Mammary epithelial cell (primary cell): ENCODE measurements at regions of chr9 and their contacts with region 1.

Region 1: DNA sequence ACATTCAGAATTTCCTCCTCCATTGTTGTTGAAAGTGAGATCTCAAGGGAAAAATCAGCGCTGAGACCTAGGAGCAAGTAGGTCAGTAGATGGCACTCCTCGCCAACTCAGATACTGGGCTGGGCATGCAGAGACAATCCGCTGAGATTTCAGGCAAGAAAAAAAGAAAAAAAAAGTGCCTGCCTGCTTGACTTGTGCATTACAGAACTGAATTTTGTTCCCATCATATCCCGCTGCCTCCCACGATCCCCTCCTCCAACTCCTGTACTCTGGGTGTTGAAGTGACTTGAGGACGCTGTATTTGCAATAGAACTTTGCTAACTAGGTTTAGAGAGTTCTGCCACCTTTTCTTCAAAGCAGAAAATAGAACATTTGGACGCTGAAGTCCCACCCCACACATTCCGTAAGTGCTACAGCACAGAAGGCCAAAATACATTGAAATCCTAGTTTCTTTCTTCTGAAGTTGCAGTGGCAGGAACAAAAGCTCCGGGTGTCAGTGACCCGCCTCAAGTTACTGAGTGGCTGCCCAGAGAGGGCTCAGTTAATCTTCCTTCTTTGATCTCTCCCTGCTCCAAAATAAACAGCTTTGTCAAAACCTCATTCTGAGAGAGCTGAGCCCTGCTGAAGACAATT is 265.8 kb downstream of the MLLT3 start:
- DNase-seq: peak; percentile 70
- H3K4me3 ChIP-seq: no peak overlapping the region
- H3K27ac ChIP-seq: no peak overlapping the region
- H3K4me1 ChIP-seq: peaks cover 9% of the 10 kb centered on the region
- H3K27me3 ChIP-seq: no peaks in the 10 kb centered on the region
- CTCF ChIP-seq: peak; percentile 85 to 89

Region 2: GRCh38 chr9:20197976-20198685 is 158.4 kb before region 1 on chr9:
- CTCF ChIA-PET with region 1: no interaction called
- dilution Hi-C with region 1: no loop called
- in situ Hi-C with region 1: no loop called
- intact Hi-C with region 1: loop called (anchors 2 kb)
- DNase-seq: peak; percentile 43
- H3K4me3 ChIP-seq: no peak overlapping the region
- H3K27ac ChIP-seq: no peak overlapping the region
- H3K4me1 ChIP-seq: no peaks in the 10 kb centered on the region
- H3K27me3 ChIP-seq: no peaks in the 10 kb centered on the region
- CTCF ChIP-seq: peak in 1 of 2 donors; percentile 13

Region 3: DNA sequence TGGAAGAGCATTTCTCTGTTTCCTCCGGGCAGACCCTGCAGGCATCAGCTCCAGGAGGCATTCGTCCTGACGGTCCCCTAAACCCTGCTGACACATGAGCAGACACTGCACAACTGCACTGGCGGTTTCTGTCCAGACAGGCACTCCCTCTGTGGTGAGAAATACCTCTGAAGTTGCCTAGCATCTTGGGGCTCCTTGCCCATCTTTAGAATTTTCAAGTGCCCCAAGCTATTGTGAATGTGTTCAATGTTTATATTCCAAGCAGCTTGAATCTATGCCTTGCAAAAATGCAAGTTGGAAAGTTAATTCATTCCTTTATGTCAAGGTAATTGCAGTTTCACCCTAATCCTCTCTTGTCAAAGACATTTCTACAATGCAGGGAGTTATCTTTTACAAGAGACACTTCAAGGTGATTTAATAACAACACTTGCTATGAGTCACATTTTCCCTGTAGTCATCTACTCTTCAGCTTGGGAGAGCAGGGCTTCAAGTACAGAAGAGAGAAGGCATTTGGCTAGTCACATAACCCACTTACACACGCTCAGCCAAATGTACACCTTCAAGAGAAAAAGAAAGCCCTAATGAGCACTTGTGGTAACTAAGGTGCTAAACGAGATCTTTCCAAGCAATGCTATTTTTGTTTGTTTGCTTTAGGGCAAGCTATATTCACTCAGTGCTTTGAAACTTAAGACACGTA is 36.7 kb before region 1 on chr9:
- CTCF ChIA-PET with region 1: no interaction called
- dilution Hi-C with region 1: no loop called
- in situ Hi-C with region 1: no loop called
- intact Hi-C with region 1: loop called (anchors 2 kb)
- DNase-seq: peak; percentile 85
- H3K4me3 ChIP-seq: no peak overlapping the region
- H3K27ac ChIP-seq: peak overlapping the region; percentile 74
- H3K4me1 ChIP-seq: peaks cover 42% of the 10 kb centered on the region
- H3K27me3 ChIP-seq: no peaks in the 10 kb centered on the region
- CTCF ChIP-seq: no peak

Region 4: DNA sequence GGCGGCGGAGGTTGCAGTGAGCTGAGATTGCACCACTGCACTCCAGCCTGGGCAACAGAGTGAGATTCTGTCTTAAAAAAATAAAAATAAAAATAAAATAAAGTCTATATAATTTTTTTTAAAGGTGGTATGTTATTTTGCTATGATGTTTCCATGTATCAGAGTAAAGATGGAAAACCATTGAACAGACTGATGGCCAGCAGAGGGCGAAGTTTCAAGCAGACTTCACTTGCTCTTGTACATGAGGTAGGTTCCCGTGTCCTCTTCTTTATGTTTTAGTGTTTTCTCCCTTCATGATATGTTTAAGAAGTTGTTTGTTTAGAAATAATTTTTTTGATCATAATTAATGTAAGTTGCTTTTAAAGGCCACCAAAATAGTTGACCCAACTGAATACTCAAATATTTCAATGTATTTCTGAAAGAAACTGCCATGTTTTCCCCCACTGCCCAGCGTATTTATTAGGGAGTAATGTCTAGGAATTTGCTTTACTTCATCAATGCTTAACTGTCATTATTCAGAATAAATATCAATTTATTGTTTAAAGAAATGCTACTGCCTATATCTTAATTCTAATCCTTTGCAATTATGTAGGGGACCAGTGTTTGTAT is 528.6 kb after region 1 on chr9:
- CTCF ChIA-PET with region 1: no interaction called
- dilution Hi-C with region 1: no loop called
- in situ Hi-C with region 1: no loop called
- intact Hi-C with region 1: loop called (anchors 5 kb)
- DNase-seq: peak; percentile 37
- H3K4me3 ChIP-seq: no peak overlapping the region
- H3K27ac ChIP-seq: no peak overlapping the region
- H3K4me1 ChIP-seq: no peaks in the 10 kb centered on the region
- H3K27me3 ChIP-seq: no peaks in the 10 kb centered on the region
- CTCF ChIP-seq: peak; percentile 57 to 73

Region 5: DNA sequence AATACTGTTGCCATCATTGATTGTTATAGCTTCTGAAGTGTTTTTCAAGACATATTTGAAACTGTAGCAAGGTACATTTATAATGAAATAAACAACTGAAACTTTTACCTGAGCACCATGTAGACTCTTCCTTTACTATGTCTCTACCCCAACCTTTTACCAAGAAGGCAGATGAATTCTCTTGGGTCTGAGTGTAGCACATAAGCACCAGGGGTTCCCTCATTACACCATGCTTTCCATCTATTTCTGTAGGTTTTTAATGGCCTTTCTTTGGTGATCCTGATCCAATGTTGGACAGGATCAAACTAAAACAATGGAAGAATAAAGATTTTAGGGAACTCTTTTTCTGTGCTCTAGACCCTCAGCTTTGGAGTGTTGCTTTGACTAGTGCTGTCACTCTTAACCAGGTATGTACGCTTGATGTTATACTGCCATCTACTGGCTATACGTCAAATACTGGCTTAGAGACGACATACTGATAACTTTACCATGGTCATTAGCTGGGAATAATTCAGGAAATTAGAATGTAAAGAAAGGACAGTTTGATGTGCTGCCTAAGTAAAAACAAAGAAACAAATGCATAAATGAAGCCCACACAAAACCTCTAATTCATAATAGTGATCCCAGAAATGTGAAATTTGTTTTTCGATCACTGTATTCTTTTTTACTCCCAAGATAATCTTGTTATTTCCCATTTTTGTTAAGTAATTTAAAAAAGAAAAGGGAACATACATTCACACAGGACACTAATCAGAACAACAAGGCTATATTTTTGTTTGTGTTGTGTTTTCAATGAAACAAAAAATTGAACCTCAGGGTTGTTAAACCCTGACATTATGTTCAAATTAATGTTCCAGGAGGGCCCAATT is 754.4 kb after region 1 on chr9:
- CTCF ChIA-PET with region 1: no interaction called
- dilution Hi-C with region 1: no loop called
- in situ Hi-C with region 1: loop called (anchors 25 kb)
- intact Hi-C with region 1: loop called (anchors 2 kb)
- DNase-seq: peak; percentile 52
- H3K4me3 ChIP-seq: no peak overlapping the region
- H3K27ac ChIP-seq: no peak overlapping the region
- H3K4me1 ChIP-seq: no peaks in the 10 kb centered on the region
- H3K27me3 ChIP-seq: no peaks in the 10 kb centered on the region
- CTCF ChIP-seq: peak; percentile 76 to 85